Activated CD8-positive, alpha-beta T cell treated with anti-CD3 and anti-CD28 coated beads for 36 hours (primary cell): ENCODE measurements at regions of chr17 and their contacts with region 1.

Region 1: GRCh38 chr17:50872710-50873424 is 6.7 kb upstream of the TOB1 start:
- DNase-seq: peak; percentile 83
- ATAC-seq: peak; percentile 62
- H3K4me3 Mint-ChIP-seq: no peak overlapping the region
- H3K27ac Mint-ChIP-seq: peak overlapping the region; percentile 46
- H3K4me1 Mint-ChIP-seq: peaks cover 40% of the 10 kb centered on the region
- H3K27me3 Mint-ChIP-seq: no peaks in the 10 kb centered on the region
- CTCF ChIP-seq: no peak

Region 2: DNA sequence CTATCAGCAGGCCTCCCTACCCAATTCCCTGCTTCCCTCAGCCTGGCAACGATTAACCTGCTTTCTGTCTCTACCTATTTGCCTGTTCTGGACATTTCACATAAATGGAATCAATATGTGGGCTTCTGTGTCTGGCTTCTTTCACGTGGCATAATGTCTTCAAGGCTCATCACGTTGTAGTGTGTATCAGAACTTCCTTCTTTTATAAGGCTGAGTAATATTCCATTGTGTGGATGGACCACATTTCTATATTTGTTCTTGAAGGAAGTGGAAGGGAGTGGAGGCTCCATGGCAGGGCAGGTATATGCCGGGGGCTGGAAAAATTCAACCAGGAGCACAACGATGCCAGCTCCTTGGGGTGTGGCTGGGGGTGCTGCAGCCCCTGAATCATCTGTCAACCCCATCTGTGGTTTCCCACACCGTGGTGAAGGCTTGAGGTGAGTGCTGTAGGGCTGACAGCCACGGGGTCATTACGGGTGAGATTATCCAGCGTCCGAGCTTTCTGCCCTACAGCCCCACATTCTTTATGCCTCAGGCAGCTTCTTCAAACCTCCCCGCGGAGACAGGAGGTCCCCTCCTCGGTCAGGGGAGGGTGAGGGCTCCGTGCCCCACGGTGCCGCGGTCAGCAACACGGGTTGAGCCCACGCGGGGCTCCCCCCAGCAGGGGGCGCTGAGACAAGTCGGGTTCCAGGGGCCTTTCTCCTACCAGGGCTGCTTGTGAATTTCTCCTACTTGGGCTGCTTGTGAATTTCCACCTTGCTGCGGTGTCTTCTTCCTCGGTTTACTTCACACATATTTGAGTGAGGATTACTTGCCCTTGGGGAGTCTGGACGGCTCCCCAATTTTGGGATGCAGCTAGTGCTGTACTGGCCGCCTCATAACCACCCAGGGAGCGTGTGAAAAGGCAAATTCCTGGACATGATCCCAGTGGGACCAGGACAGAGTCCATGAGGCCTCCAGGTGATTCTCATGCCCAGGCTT is 55.8 kb before region 1 on chr17:
- CTCF ChIA-PET with region 1: no interaction called
- POLR2A ChIA-PET with region 1: no interaction called
- intact Hi-C with region 1: no loop called
- DNase-seq: peak; percentile 60
- ATAC-seq: peak; percentile 71
- H3K4me3 Mint-ChIP-seq: no peak overlapping the region
- H3K27ac Mint-ChIP-seq: no peak overlapping the region
- H3K4me1 Mint-ChIP-seq: peaks cover 6% of the 10 kb centered on the region
- H3K27me3 Mint-ChIP-seq: peaks cover 12% of the 10 kb centered on the region
- CTCF ChIP-seq: peak; percentile 88

Region 3: DNA sequence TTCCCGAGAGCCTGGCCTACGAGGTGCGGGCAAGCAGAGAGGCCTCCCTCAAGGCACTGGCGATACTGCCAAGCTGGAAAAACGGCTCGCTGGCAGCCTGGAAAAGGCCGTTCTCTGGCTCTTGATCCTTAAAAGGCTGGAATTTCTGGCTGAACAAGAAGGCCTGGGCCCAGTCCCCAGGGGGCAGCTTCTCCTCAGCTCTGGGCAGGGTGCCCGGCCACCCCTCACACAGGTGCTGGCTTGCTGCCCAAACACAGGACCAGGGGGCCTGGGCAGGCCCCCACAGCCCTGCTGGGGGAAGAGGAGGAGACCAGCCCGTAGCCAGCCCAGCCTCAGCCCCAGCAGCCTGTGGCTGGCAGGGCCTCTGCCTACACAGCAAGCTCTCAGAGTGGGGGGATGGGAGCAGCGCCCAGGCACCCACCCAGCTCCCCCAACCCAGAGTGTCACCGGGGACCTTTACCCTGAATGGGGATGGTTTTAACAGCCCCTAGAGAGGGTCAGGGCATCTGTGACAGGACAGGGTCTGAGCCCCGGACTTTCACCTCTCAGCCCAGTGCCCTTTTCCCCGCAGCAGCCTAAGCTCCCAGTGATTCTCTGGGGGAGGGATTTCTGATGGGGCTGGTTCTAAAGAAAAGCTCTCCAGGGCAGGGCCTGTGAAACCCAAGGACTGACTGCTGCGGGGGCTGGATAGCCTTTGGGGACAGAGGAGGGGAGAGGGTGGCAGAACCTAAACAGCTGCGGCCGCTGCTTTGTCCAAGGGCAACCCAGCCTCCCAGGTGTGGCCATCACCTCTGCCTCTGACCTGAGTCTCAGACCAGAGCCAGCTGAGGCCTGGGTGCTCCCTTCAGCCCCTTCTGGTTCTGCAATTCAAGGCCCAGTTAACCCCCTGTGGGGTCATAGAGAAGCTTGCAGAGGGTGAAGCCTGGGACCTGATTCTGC is 31.9 kb after region 1 on chr17:
- CTCF ChIA-PET with region 1: interaction called, 12 read pairs
- POLR2A ChIA-PET with region 1: interaction called, 135 read pairs
- intact Hi-C with region 1: no loop called
- DNase-seq: no peak
- ATAC-seq: peak; percentile 25
- H3K4me3 Mint-ChIP-seq: no peak overlapping the region
- H3K27ac Mint-ChIP-seq: peak overlapping the region; percentile 93
- H3K4me1 Mint-ChIP-seq: peaks cover 56% of the 10 kb centered on the region
- H3K27me3 Mint-ChIP-seq: no peaks in the 10 kb centered on the region
- CTCF ChIP-seq: no peak

Region 4: GRCh38 chr17:50909765-50910605 is 37.1 kb after region 1 on chr17:
- CTCF ChIA-PET with region 1: interaction called, 12 read pairs
- POLR2A ChIA-PET with region 1: interaction called, 135 read pairs
- intact Hi-C with region 1: loop called (anchors 5 kb)
- DNase-seq: peak; percentile 94
- ATAC-seq: peak; percentile 81
- H3K4me3 Mint-ChIP-seq: peak overlapping the region; percentile 26
- H3K27ac Mint-ChIP-seq: peak overlapping the region; percentile 89
- H3K4me1 Mint-ChIP-seq: peaks cover 63% of the 10 kb centered on the region
- H3K27me3 Mint-ChIP-seq: no peaks in the 10 kb centered on the region
- CTCF ChIP-seq: no peak